ENCODE measurements at regions of chr17 and their contacts with region 1.

Region 1: DNA sequence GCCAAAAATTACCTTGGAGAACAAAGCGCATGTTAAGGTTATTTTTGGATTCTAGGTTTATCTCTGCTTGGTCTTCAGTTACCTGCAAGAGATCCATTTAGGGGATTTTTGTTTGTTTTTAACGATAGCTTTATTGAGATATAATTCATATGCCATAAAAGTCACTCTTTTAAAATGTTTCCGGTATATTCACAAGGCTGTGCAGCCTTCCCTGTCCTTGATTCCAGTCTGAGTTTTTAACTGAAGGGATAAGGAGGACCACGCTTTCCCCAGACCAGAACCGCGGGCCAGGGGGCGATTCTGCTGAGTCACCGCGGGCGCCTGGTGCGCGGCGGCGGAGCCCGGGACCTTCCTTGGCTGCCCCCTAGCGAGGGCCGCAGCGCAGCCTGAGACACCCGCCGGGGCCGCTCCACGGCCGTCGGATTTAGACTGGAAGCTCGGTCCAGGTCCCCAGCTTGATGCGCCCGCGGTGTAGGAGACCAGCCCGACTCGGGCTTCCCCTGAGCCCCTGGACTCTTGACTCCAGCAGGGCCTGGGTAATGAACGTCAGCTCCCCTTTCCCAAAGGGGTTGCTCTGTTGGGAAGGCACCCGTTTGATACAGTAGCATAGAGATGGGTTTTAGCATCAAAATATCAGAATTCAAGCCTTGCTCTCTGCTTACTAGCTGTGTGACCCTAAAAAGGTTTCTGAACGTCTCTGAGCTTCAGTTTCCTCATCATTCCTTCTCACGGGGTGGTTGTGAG is 50.0 kb upstream of the STH start:
- DNase-seq: peak; percentile 85
- ATAC-seq: peak; percentile 90

Region 2: DNA sequence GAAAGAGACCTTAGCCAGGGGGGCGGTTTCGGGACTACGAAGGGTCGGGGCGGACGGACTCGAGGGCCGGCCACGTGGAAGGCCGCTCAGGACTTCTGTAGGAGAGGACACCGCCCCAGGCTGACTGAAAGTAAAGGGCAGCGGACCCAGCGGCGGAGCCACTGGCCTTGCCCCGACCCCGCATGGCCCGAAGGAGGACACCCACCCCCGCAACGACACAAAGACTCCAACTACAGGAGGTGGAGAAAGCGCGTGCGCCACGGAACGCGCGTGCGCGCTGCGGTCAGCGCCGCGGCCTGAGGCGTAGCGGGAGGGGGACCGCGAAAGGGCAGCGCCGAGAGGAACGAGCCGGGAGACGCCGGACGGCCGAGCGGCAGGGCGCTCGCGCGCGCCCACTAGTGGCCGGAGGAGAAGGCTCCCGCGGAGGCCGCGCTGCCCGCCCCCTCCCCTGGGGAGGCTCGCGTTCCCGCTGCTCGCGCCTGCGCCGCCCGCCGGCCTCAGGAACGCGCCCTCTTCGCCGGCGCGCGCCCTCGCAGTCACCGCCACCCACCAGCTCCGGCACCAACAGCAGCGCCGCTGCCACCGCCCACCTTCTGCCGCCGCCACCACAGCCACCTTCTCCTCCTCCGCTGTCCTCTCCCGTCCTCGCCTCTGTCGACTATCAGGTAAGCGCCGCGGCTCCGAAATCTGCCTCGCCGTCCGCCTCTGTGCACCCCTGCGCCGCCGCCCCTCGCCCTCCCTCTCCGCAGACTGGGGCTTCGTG is 54.9 kb before region 1 on chr17 and contains the start of gene MAPT:
- intact Hi-C with region 1: loop called (anchors 2 kb)
- DNase-seq: peak; percentile 94
- ATAC-seq: peak; percentile 98
- total RNA-seq, gene MAPT: 39.3 TPM